HepG2 (cell line): ENCODE measurements at regions of chr18 and their contacts with region 1.

Region 1: GRCh38 chr18:32092422-32093101 is 888 bp downstream of the RNF138 start:
- DNase-seq: peak; percentile 89
- ATAC-seq: peak; percentile 93
- H3K4me3 ChIP-seq: peak overlapping the region; percentile 79 to 93 (median 92)
- H3K27ac ChIP-seq: peak overlapping the region; percentile 98
- H3K4me1 ChIP-seq: peaks cover 48% of the 10 kb centered on the region
- H3K27me3 ChIP-seq: no peaks in the 10 kb centered on the region; a peak in 1 of 5 replicates
- CTCF ChIP-seq: no peak
- EP300 ChIP-seq: peak in 1 of 2 experiments; percentile 18; a peak in 1 of 4 replicates
- POLR2A ChIP-seq: peak; percentile 70 to 89; a peak in 3 of 4 replicates
- RAD21 ChIP-seq: no peak; the same call in 1 of the 2 replicates

Region 2: GRCh38 chr18:31581498-31582215 is 510.9 kb before region 1 on chr18:
- CTCF ChIA-PET with region 1: no interaction called
- POLR2A ChIA-PET with region 1: no interaction called
- in situ Hi-C with region 1: no loop called
- intact Hi-C with region 1: loop called (anchors 10 kb)
- DNase-seq: peak; percentile 34
- ATAC-seq: peak; percentile 39; the same call in 2 of the 3 replicates
- H3K4me3 ChIP-seq: no peak overlapping the region
- H3K27ac ChIP-seq: no peak overlapping the region
- H3K4me1 ChIP-seq: peaks cover 72% of the 10 kb centered on the region
- H3K27me3 ChIP-seq: no peaks in the 10 kb centered on the region
- CTCF ChIP-seq: no peak
- EP300 ChIP-seq: no peak
- POLR2A ChIP-seq: no peak
- RAD21 ChIP-seq: no peak

Region 3: GRCh38 chr18:32110005-32110404 is 17.4 kb after region 1 on chr18:
- CTCF ChIA-PET with region 1: no interaction called
- POLR2A ChIA-PET with region 1: interaction called, 3 read pairs
- in situ Hi-C with region 1: no loop called
- intact Hi-C with region 1: loop called (anchors 2 kb)
- DNase-seq: no peak
- ATAC-seq: no peak
- H3K4me3 ChIP-seq: no peak overlapping the region
- H3K27ac ChIP-seq: no peak overlapping the region
- H3K4me1 ChIP-seq: peaks cover 24% of the 10 kb centered on the region
- H3K27me3 ChIP-seq: no peaks in the 10 kb centered on the region; a peak in 1 of 5 replicates
- CTCF ChIP-seq: no peak
- EP300 ChIP-seq: no peak
- POLR2A ChIP-seq: no peak
- RAD21 ChIP-seq: no peak

Region 4: DNA sequence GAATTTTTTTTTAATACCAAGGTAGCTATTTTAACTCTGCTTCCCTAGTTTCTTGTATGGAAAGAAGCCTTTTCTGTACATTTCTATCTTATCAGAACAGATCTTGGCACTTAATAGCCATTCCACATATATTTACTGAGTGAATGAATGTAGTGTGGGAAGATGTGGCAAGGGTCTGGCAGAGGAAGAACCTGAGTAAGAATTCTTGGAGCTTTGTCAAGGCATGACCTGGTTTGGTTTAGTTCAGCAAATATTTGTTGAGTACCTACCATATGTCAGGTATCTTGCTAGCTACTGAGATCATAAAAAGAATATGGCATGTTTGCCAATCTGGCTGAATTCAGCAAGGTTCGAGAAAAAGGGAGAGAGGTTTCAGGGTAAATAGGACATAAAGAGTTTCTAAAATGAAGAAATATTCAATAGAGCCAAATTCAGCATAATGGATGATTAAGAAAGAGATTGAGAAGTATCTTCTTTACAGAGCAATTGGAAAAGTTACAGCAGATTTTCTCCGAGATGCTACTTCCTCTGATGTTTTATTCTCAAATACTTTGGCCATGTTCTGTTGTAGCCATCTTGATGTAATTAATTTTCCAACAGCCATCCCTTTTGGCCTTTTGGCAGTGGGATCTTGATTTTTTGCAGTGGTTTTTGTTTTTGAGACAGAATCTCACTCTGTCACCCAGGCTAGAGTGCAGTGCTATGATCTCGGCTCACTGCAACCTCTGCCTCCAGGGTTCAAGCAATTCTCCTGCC is 75.6 kb after region 1 on chr18:
- CTCF ChIA-PET with region 1: no interaction called
- POLR2A ChIA-PET with region 1: no interaction called
- in situ Hi-C with region 1: no loop called
- intact Hi-C with region 1: no loop called
- DNase-seq: no peak
- ATAC-seq: no peak
- H3K4me3 ChIP-seq: no peak overlapping the region
- H3K27ac ChIP-seq: no peak overlapping the region
- H3K4me1 ChIP-seq: no peaks in the 10 kb centered on the region
- H3K27me3 ChIP-seq: no peaks in the 10 kb centered on the region; a peak in 1 of 5 replicates
- CTCF ChIP-seq: no peak
- EP300 ChIP-seq: no peak
- POLR2A ChIP-seq: no peak
- RAD21 ChIP-seq: no peak

Region 5: DNA sequence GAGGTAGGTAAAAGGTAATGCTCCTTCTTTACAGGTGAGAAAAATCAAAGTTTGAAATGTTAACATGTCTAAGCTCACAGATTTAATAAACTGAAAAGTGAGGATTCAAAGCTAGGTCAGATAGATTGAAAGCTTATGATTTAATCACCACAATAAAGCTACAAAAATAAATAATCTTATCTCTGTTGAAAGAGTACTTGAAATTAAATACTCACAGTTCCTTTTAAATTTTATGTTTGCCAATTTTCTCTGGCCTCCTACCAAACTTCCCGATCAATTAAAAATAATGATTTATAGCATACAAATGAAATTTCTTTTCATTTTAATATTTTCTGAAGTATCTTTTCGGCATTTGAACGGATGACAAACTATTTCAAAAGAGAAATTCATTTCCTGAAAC is 300.8 kb after region 1 on chr18:
- CTCF ChIA-PET with region 1: no interaction called
- POLR2A ChIA-PET with region 1: no interaction called
- in situ Hi-C with region 1: no loop called
- intact Hi-C with region 1: no loop called
- DNase-seq: no peak
- ATAC-seq: no peak
- H3K4me3 ChIP-seq: no peak overlapping the region
- H3K27ac ChIP-seq: no peak overlapping the region
- H3K4me1 ChIP-seq: no peaks in the 10 kb centered on the region
- H3K27me3 ChIP-seq: no peaks in the 10 kb centered on the region
- CTCF ChIP-seq: no peak
- EP300 ChIP-seq: no peak
- POLR2A ChIP-seq: no peak
- RAD21 ChIP-seq: no peak